CD8-positive, alpha-beta T cell (primary cell): ENCODE measurements at regions of chr11 and their contacts with region 1.

Region 1: DNA sequence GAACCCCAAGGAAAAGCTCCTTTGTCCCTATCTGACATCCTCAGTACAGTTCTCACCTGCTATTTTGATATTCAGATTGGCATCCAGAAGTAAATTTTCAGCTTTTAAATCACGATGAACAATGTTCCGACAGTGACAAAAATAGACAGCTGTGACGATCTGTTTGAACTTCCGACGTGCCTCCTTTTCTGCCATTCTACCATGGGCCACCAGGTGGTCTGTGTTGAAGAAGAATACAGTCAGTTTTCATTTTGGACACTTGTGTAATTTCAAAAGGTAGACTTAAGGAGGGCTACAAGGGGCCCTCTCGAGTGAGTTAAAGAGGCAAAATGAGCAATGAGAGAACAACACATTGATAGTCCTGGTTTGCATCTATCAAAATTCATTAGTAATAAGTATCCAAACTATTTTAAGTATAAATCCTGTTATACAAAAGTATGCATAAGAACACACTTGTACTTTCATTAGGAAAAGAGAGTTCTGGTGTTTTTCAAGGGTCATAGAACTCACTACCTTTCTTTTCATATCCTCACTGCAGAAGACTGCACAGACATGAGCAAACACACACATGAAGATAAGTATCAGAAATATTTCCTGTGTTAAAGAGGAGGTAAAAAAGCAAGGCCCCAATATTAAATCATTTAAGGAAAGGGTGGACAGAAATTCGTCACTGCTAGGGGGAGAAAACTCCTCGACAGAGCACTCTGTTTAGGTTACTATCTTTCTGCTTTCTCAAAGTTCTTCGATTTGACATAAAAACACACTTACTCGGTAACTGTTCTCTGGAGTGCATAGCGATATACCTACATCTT is 89.9 kb upstream of the APOA1 start:
- DNase-seq: peak; percentile 18 to 81 (median 56)
- ATAC-seq: peak; percentile 59
- H3K4me3 ChIP-seq: no peak overlapping the region
- H3K4me3 Mint-ChIP-seq: peak overlapping the region; percentile 65
- H3K27ac ChIP-seq: peak overlapping the region; percentile 37 to 96
- H3K27ac Mint-ChIP-seq: peak overlapping the region; percentile 86
- H3K4me1 ChIP-seq: peaks cover 75% of the 10 kb centered on the region
- H3K4me1 Mint-ChIP-seq: peaks cover 80% of the 10 kb centered on the region
- H3K27me3 ChIP-seq: no peaks in the 10 kb centered on the region
- H3K27me3 Mint-ChIP-seq: no peaks in the 10 kb centered on the region
- CTCF ChIP-seq: peak; percentile 71

Region 2: DNA sequence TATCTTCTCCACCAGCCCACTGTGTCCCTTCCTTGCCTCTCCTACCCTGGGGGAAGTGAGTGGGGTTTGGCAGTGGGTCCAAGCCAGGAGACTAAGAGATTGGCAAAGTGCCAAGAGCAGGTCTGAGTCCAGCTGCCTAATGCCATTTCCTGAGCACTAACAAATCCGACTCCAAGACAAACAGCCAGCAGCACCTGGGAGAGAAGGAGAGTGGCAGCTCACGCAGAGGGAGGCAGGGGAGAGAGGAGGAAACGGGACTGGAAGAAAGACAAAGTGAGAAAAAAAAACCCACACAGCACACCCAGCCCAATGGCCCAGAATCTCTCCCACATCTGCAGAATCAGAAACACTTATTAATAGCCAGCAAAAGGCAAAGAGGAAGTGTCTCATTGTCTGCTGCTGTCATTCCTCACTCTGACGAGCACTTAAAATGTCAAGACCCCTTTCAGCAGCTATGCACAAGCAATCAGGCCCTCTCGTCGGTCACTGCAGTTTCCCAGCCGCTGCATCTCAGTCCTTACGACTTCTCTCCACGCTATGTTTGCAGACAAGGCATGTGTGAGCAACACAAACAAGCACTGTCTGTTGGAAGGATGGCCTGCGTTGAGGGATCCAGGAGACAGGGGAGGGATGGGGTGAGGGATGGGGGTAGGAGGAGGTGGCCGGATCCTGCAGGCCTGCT is 864.7 kb before region 1 on chr11:
- CTCF ChIA-PET with region 1: no interaction called
- POLR2A ChIA-PET with region 1: no interaction called
- intact Hi-C with region 1: no loop called
- DNase-seq: no peak
- ATAC-seq: no peak
- H3K4me3 ChIP-seq: no peak overlapping the region
- H3K4me3 Mint-ChIP-seq: no peak overlapping the region
- H3K27ac ChIP-seq: no peak overlapping the region
- H3K27ac Mint-ChIP-seq: no peak overlapping the region
- H3K4me1 ChIP-seq: no peaks in the 10 kb centered on the region
- H3K4me1 Mint-ChIP-seq: no peaks in the 10 kb centered on the region
- H3K27me3 ChIP-seq: no peaks in the 10 kb centered on the region
- H3K27me3 Mint-ChIP-seq: peaks cover 9% of the 10 kb centered on the region
- CTCF ChIP-seq: no peak

Region 3: DNA sequence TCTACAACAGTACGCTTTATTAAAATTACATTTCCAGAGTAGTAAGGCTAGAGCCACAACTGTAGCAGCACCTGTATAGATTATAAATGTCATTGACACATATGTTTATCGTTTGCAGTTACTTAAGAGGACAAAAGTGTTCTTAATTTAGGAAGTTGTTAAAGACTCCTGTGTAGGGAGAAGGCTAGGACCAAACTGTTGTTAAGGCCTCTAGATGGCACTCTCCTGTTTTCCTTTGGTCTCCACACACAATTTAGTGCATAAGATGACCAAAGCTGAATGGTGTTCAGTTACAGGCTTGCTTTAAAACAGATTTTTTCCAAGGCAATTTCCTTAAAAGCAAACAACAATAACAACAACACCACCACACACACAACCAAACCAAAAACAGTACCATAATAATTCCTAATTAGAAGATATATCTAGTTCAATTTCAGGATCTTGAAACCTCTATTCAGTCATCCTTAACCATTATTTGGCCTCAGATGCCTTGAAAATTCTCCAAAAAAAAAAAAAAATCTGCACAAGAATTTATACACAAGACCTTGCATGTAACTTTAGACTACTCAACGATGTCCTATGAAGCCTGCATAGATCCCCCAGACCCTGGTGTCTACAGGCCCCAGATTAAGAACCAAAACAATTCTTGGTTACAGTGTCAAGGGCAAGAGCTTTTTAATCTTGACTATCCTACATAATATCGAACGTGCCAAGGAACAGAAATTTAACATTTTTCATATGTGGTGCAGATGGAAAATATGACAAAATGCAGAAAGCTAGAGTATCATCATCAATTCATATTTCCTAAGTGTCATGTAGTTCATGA is 47.4 kb before region 1 on chr11:
- CTCF ChIA-PET with region 1: interaction called, 3 read pairs
- POLR2A ChIA-PET with region 1: no interaction called
- intact Hi-C with region 1: loop called in 1 of 2 experiments (anchors 5 kb)
- DNase-seq: peak in 4 of 9 experiments; percentile 15 to 76 (median 44)
- ATAC-seq: peak; percentile 75
- H3K4me3 ChIP-seq: no peak overlapping the region
- H3K4me3 Mint-ChIP-seq: no peak overlapping the region
- H3K27ac ChIP-seq: no peak overlapping the region
- H3K27ac Mint-ChIP-seq: no peak overlapping the region
- H3K4me1 ChIP-seq: no peaks in the 10 kb centered on the region
- H3K4me1 Mint-ChIP-seq: peaks cover 5% of the 10 kb centered on the region
- H3K27me3 ChIP-seq: no peaks in the 10 kb centered on the region
- H3K27me3 Mint-ChIP-seq: no peaks in the 10 kb centered on the region
- CTCF ChIP-seq: peak; percentile 71

Region 4: GRCh38 chr11:116960930-116961329 is 33.6 kb after region 1 on chr11:
- CTCF ChIA-PET with region 1: interaction called, 4 read pairs
- POLR2A ChIA-PET with region 1: no interaction called
- intact Hi-C with region 1: loop called in 1 of 2 experiments (anchors 5 kb)
- DNase-seq: no peak
- ATAC-seq: no peak
- H3K4me3 ChIP-seq: no peak overlapping the region
- H3K4me3 Mint-ChIP-seq: no peak overlapping the region
- H3K27ac ChIP-seq: no peak overlapping the region
- H3K27ac Mint-ChIP-seq: peak overlapping the region; percentile 46
- H3K4me1 ChIP-seq: peaks cover 3% of the 10 kb centered on the region
- H3K4me1 Mint-ChIP-seq: peaks cover 56% of the 10 kb centered on the region
- H3K27me3 ChIP-seq: no peaks in the 10 kb centered on the region
- H3K27me3 Mint-ChIP-seq: no peaks in the 10 kb centered on the region
- CTCF ChIP-seq: no peak

Region 5: DNA sequence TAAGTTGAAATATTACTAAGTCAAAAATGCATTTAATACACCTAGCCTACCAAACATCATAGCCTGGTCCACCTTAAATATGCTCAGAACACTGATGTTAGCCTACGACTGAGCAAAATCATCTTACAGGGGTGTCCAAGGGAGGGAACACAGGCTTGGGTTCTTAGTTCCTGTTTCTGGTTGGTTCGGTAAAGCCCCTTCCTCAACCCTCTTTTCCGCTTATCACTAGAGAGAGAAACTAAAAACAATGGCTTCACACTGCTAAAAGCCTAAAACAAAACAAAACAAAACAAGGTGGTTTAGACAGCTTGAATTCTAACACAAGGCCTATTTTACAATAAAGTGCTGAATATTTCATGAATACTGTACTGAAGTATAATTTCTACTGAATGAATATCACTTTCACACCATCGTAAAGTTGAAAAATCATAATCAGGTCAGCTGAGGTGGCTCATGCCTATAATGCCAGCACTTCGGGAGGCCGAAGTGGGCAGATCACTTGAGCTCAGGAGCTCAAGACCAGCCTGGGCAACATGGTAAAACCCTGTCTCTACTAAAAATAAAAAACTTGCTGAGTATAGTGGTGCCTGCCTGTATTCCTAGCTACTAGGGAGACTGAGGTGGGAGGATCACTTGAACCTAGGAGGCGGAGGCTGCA is 52.9 kb after region 1 on chr11:
- CTCF ChIA-PET with region 1: interaction called, 3 read pairs
- POLR2A ChIA-PET with region 1: no interaction called
- intact Hi-C with region 1: loop called in 1 of 2 experiments (anchors 2 kb)
- DNase-seq: peak in 2 of 9 experiments; percentile 40 to 73
- ATAC-seq: peak; percentile 79
- H3K4me3 ChIP-seq: peak overlapping the region; percentile 6 to 24
- H3K4me3 Mint-ChIP-seq: peak overlapping the region; percentile 82
- H3K27ac ChIP-seq: peak overlapping the region; percentile 50 to 64
- H3K27ac Mint-ChIP-seq: peak overlapping the region; percentile 82
- H3K4me1 ChIP-seq: peaks cover 25% of the 10 kb centered on the region
- H3K4me1 Mint-ChIP-seq: peaks cover 61% of the 10 kb centered on the region
- H3K27me3 ChIP-seq: no peaks in the 10 kb centered on the region
- H3K27me3 Mint-ChIP-seq: no peaks in the 10 kb centered on the region
- CTCF ChIP-seq: no peak

Region 6: GRCh38 chr11:117026593-117027330 is 99.4 kb after region 1 on chr11:
- CTCF ChIA-PET with region 1: no interaction called
- POLR2A ChIA-PET with region 1: interaction called, 3 read pairs
- intact Hi-C with region 1: loop called in 1 of 2 experiments (anchors 10 kb)
- DNase-seq: no peak
- ATAC-seq: no peak
- H3K4me3 ChIP-seq: no peak overlapping the region
- H3K4me3 Mint-ChIP-seq: no peak overlapping the region
- H3K27ac ChIP-seq: no peak overlapping the region
- H3K27ac Mint-ChIP-seq: no peak overlapping the region
- H3K4me1 ChIP-seq: peaks cover 16% of the 10 kb centered on the region
- H3K4me1 Mint-ChIP-seq: peaks cover 69% of the 10 kb centered on the region
- H3K27me3 ChIP-seq: no peaks in the 10 kb centered on the region
- H3K27me3 Mint-ChIP-seq: no peaks in the 10 kb centered on the region
- CTCF ChIP-seq: no peak